Activated T-helper 1 cell treated with anti-CD3 and anti-CD28 coated beads, Interleukin-12 subunit alpha, Interleukin-12 subunit beta, Interleukin-2, Interleukin-4 antibody, amounts not matched to agents 30 ng/mL and 10 ng/mL and 1 ng/mL, durations not matched to agents 14 hours and 24 hours and 36 hours (primary cell): ENCODE measurements at regions of chr2 and their contacts with region 1.

Region 1: DNA sequence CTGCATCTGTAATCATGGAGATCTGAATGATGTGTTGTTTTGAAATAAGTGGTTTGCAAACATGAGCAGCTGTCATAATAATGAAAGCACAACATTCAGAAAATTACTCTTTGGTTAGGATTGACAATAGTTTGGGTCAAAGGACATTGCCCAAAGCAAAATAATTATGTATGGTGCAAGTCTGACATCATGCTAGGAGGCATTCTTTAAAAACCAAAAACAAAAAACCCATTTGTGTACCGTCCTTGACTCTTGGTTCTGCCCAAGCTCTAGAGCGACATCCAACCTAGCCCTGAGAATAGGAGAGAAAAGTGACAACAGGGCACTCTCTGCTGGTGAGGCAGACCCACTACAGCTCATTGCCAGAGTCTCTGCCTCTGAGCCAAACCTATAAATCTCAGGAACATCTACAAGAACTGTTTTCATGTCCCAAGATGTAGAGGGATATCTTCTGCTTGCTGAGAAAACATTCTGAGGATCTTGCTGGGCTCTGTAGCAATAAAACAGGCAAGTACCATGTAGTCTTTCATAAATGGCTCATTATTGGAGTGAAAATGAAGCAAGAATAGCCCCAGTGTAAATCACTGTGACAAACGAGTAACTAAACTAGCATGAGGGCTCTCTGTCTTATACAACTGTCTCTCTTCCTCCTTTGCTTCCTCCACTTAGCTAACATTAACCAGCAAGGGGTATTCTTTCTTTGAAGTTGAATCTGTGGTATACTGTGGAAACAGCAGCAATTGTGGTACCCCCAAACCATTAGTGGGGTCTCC is 266.8 kb upstream of the CXCR4 start:
- DNase-seq: peak; percentile 43
- H3K4me3 Mint-ChIP-seq: no peak overlapping the region
- H3K27ac Mint-ChIP-seq: peak overlapping the region; percentile 99
- H3K4me1 Mint-ChIP-seq: peaks cover 39% of the 10 kb centered on the region
- H3K27me3 Mint-ChIP-seq: no peaks in the 10 kb centered on the region

Region 2: DNA sequence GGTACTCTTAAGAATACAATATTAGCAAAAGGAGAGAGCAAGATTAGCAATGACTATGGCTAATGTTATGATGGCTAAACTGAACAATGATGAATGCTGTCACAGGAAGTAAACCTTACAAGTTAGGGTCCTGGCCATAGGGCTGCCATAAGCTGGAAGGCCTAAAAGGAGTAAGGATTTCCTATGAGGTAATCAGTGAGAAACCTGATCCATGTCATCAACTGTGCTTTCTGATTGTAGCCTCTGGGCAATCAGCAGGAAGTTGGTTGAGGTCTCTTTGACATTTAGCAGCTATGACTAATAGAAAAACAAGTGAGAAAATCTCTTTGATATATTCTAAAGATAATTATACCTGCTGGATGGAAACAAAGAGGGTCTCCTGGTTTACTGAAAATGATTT is 1139.7 kb before region 1 on chr2:
- intact Hi-C with region 1: loop called (anchors 10 kb)
- DNase-seq: peak; percentile 6
- H3K4me3 Mint-ChIP-seq: no peak overlapping the region
- H3K27ac Mint-ChIP-seq: peak overlapping the region; percentile 32
- H3K4me1 Mint-ChIP-seq: peaks cover 16% of the 10 kb centered on the region
- H3K27me3 Mint-ChIP-seq: no peaks in the 10 kb centered on the region

Region 3: GRCh38 chr2:135820003-135820618 is 564.6 kb before region 1 on chr2:
- intact Hi-C with region 1: loop called (anchors 1 kb)
- DNase-seq: peak; percentile 75
- H3K4me3 Mint-ChIP-seq: peak overlapping the region; percentile 80
- H3K27ac Mint-ChIP-seq: peak overlapping the region; percentile 89
- H3K4me1 Mint-ChIP-seq: peaks cover 52% of the 10 kb centered on the region
- H3K27me3 Mint-ChIP-seq: no peaks in the 10 kb centered on the region

Region 4: GRCh38 chr2:135948642-135949355 is 435.9 kb before region 1 on chr2:
- intact Hi-C with region 1: loop called (anchors 1 kb)
- DNase-seq: no peak
- H3K4me3 Mint-ChIP-seq: peak overlapping the region; percentile 53
- H3K27ac Mint-ChIP-seq: peak overlapping the region; percentile 87
- H3K4me1 Mint-ChIP-seq: peaks cover 58% of the 10 kb centered on the region
- H3K27me3 Mint-ChIP-seq: no peaks in the 10 kb centered on the region

Region 5: DNA sequence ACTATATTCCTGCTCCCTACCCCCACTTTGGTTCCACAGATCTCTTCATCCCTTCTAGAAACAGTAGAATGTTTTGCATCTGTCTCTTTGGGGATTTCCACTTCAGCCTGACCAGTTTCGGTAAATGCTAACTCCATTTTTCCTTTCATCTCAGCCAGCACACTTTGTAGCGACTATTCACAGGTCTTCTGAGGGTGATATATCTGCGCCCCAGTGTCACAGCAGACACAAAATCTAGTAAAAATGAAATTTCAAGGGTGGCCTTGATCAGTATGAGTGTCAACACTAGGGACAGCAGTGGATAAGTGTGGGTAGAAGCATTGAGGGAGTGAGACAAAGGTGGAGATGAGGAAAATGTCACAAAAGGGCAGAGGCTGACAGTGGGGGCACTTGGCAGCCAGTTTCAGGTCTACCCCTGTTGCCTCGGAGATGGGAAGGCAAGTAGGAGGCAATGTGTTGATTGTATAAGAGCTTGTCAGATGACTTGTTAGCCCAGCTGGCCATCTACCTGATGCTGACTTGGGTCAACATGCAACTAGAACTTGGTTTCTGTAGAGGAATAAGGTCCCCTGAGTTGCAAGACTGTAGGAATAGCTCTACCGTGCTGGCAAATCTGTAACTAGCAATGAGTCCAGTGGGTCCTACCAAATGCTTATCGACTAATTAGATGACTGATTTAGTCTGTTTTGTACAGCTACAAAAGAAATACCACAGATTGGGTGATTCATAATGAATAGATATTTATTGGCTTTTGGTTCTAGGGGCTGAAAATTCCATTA is 327.5 kb before region 1 on chr2:
- intact Hi-C with region 1: loop called (anchors 1 kb)
- DNase-seq: peak; percentile 65
- H3K4me3 Mint-ChIP-seq: peak overlapping the region; percentile 43
- H3K27ac Mint-ChIP-seq: peak overlapping the region; percentile 90
- H3K4me1 Mint-ChIP-seq: peaks cover 87% of the 10 kb centered on the region
- H3K27me3 Mint-ChIP-seq: no peaks in the 10 kb centered on the region

Region 6: DNA sequence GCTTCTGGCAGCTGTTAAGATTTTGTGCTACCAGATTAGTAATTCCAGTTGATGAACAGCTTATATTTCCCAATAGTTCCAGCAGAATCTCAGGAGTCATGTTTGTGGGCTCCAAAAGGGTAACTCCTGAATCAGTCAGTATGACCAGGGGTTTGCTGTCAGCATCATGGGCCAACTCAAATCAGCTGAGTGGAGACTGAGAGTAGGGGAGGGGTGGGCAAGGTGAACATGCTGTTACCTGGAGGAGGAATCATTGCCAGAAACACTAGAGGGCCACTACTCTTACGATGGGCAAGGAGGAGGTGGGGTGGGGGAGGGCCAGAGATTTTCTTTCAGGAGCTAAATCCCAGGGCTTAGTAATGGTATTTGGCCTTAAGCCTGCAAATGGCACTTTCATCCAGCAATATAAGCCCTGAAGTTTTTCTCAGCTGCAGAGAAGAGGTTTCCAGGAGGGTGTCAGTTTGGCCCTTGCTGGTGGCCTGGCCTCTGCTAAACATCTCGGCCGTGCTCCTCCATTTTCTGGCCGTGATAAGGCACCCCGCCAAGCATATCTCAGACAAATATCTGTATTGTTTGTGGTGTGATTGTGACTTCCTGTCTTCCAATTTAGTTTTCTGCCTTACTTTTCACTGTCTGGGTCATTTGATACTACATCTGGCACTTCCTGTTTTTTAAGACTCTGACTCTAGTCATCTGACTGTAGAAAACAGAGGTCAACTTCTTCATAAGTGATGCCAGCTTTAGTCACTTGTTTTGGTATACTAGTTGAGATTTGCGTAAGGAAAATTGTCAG is 146.2 kb before region 1 on chr2:
- intact Hi-C with region 1: loop called (anchors 1 kb)
- DNase-seq: peak; percentile 12
- H3K4me3 Mint-ChIP-seq: peak overlapping the region; percentile 27
- H3K27ac Mint-ChIP-seq: peak overlapping the region; percentile 88
- H3K4me1 Mint-ChIP-seq: peaks cover 49% of the 10 kb centered on the region
- H3K27me3 Mint-ChIP-seq: no peaks in the 10 kb centered on the region

Region 7: GRCh38 chr2:136423516-136423996 is 38.8 kb after region 1 on chr2:
- intact Hi-C with region 1: loop called (anchors 1 kb)
- DNase-seq: peak; percentile 70
- H3K4me3 Mint-ChIP-seq: peak overlapping the region; percentile 71
- H3K27ac Mint-ChIP-seq: peak overlapping the region; percentile 24
- H3K4me1 Mint-ChIP-seq: peaks cover 24% of the 10 kb centered on the region
- H3K27me3 Mint-ChIP-seq: peaks cover 37% of the 10 kb centered on the region